AG04450 (cell line): ENCODE measurements at regions of chr11 and their contacts with region 1.

Region 1: DNA sequence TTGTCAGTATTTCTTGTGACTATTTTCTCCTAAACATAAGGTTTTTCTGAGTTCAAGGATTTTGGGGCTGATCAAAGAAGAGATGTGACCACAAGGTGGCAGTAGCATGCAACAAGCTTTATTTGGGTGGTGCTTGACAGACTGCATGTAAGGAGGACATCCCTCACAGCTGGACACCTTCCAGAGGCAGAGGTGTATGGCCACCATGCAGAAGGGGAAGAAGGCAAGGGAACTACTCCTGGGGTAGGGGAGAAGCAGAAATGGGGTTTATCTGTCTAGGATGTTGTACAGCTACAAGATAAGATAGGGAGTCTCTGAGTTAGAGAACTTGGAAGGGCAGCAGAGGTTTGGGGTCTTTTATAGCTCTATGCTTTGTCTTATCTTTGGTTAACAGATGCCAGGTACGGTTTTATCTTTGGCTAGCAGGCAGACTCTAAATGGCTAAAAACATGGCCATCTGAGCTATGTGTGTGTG is 5.1 kb upstream of the BIRC2 start:
- DNase-seq: peak; percentile 68
- H3K4me3 ChIP-seq: no peak overlapping the region
- H3K27ac ChIP-seq: no peak overlapping the region
- H3K27me3 ChIP-seq: no peaks in the 10 kb centered on the region
- CTCF ChIP-seq: peak; percentile 81

Region 2: DNA sequence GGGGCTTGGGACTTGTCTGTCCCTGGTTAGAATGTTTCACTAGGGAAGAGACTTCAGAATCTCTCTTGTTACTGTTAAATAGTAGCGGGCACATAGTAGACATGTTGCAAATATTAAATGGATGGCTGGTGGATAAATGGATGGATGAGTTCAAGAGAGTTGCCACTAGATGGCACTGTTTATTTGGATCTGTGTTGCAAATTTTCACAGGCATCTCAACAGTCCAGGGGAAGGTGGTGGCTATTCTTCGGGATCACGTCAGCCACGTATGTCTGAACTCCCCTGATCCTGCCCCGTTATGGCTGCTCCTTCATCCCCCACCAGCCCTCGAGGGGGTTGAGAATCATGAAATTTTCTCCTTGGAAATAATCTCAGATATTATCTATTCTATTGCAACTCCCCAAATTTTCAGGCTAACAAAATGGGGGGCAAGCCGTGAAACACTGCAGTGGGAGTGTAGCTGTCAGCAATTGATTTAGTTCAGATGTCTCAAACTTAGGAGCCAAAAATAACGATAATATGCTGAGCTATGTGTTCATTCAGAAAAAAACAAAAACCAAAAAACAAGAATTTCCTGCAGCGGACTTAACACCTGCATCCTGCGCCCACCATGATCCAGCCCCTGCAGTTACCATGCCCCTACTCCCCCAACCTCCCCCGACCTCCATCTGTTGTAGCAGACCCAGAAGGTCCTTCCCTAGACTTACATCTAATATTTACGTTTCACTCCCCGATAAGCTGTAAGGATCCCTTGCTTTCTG is 53.7 kb before region 1 on chr11:
- CTCF ChIA-PET with region 1: interaction called, 16 read pairs
- POLR2A ChIA-PET with region 1: no interaction called
- DNase-seq: peak; percentile 55
- H3K4me3 ChIP-seq: peak overlapping the region; percentile 38
- H3K27ac ChIP-seq: no peak overlapping the region
- H3K27me3 ChIP-seq: no peaks in the 10 kb centered on the region
- CTCF ChIP-seq: peak; percentile 72

Region 3: GRCh38 chr11:102293873-102294601 is 47.8 kb before region 1 on chr11:
- CTCF ChIA-PET with region 1: interaction called, 16 read pairs
- POLR2A ChIA-PET with region 1: no interaction called
- DNase-seq: no peak
- H3K4me3 ChIP-seq: no peak overlapping the region
- H3K27ac ChIP-seq: no peak overlapping the region
- H3K27me3 ChIP-seq: no peaks in the 10 kb centered on the region
- CTCF ChIP-seq: peak; percentile 74

Region 4: DNA sequence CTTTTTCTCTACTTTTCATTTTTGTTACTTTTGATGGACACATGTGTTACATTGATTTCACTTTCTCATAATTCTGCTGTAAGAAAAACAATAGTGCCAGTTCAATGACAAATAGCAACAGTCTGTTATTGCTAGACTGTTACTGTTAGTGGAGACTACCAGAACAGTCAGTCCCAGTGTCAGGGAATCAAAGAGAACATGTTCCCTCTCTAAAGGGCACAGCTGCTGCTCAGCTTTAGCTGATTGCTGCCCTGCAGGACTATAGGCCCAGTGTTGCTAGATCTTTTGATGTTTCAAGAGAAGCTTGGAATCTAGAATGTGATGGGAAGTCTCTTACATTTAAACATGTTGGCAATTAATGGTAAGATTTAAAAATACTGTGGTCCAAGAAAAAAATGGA is 21.2 kb before region 1 on chr11:
- CTCF ChIA-PET with region 1: interaction called, 13 read pairs
- POLR2A ChIA-PET with region 1: no interaction called
- DNase-seq: no peak
- H3K4me3 ChIP-seq: no peak overlapping the region
- H3K27ac ChIP-seq: no peak overlapping the region
- H3K27me3 ChIP-seq: no peaks in the 10 kb centered on the region
- CTCF ChIP-seq: no peak

Region 5: GRCh38 chr11:102495161-102496042 is 153.5 kb after region 1 on chr11:
- CTCF ChIA-PET with region 1: interaction called, 30 read pairs
- POLR2A ChIA-PET with region 1: no interaction called
- DNase-seq: peak; percentile 75
- H3K4me3 ChIP-seq: no peak overlapping the region
- H3K27ac ChIP-seq: no peak overlapping the region
- H3K27me3 ChIP-seq: peaks cover 3% of the 10 kb centered on the region
- CTCF ChIP-seq: peak; percentile 62

Region 6: GRCh38 chr11:102614485-102614884 is 272.6 kb after region 1 on chr11:
- CTCF ChIA-PET with region 1: interaction called, 23 read pairs
- POLR2A ChIA-PET with region 1: no interaction called
- DNase-seq: no peak
- H3K4me3 ChIP-seq: no peak overlapping the region
- H3K27ac ChIP-seq: no peak overlapping the region
- H3K27me3 ChIP-seq: no peaks in the 10 kb centered on the region
- CTCF ChIP-seq: peak; percentile 7; the same call in 1 of the 2 replicates